Activated T-helper 1 cell treated with anti-CD3 and anti-CD28 coated beads, Interleukin-12 subunit alpha, Interleukin-12 subunit beta, Interleukin-2, Interleukin-4 antibody, amounts not matched to agents 30 ng/mL and 10 ng/mL and 1 ng/mL, durations not matched to agents 14 hours and 24 hours and 36 hours (primary cell): ENCODE measurements at regions of chr19 and their contacts with region 1.

Region 1: DNA sequence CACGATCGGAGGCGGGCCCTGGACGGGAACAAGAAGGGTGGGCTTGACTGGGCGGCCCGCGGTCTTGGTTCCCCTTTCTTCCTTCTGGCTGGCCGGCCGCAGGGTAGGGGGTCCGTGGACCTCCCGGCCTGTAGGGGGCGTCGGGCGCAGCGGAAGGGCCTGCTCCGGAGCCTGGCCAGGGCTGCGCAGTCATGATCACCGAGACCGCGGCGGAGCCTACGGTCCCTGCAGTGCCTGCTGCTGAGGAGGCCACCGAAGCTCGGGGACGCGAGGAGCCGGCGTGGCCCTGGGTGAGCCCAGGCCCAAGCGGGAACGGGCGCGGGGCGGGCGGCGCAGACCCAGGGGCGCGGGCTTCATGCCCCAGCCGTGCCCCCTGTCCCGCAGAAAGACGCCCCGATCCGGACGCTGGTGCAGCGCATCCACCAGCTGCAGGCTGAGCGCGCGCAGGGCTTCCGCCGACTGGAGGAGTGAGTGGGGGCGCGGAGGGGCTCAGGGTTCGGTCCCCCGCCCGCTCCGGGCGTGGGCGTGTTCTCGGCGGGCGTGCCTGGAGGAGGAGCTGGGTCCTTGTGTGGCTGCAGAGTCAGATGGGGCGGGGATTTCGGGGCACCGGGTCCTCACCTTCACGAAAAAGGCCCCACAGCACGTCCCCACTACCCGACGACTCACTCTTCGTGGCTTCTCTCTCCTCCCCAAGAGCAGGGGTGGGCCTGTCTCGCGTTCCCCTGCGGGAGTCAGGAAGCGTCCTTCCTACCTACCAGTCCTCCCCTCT is at the start of gene REX1BD:
- DNase-seq: peak; percentile 86
- H3K4me3 Mint-ChIP-seq: peak within 1 kb of the TSS; percentile 90
- H3K27ac Mint-ChIP-seq: peak within 1 kb of the TSS; percentile 91
- H3K4me1 Mint-ChIP-seq: peaks cover 43% of the 10 kb centered on the region
- H3K27me3 Mint-ChIP-seq: no peaks in the 10 kb centered on the region
- total RNA-seq, gene REX1BD: 134 and 135 TPM in 2 replicates

Region 2: DNA sequence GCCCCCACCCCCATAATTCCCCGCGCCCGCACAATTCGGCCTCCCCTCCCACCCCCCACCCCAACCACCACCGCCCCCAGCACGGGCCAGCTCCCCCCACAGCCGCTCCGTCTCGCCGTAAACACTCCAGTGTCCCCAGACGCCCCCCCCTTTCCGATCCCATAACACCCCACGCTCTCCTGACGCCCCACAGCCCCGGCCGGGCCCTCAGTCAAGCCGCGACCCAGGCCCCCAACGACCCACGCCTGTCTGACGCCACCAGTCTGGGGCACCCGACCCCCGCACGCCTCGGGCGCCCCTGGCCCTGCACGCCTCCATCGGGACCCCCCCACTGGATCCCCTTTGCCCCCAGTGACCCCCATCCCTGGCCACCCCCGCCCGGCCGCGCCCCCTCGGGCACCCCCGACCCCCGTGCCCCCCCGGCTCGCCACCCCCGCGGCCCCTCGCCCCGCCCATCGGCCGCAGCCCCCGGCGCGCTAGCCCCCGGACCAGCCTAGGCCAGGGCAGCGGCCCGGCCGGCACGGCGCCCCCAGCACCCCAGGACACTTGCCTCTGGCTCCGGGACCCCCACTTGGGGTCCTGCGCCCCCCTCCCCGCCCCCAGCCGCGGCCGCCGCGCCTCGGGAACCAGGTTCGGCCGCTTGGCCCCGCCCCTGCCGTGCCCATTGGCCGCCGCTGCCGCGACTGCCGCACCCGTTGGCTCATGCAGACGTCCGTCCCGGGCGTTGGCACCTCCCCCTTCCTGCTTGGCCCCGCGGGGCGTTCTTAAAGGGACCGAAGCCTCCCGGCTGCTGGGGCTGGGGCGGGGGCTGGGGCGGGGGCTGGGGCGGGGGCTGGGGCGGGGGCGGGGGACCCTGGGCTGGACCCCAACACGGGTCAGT is 45.6 kb before region 1 on chr19 and contains the start of gene FKBP8:
- intact Hi-C with region 1: loop called (anchors 1 kb)
- DNase-seq: peak; percentile 92
- H3K4me3 Mint-ChIP-seq: peak within 1 kb of the TSS; percentile 92
- H3K27ac Mint-ChIP-seq: peak within 1 kb of the TSS; percentile 99
- H3K4me1 Mint-ChIP-seq: peaks cover 27% of the 10 kb centered on the region
- H3K27me3 Mint-ChIP-seq: peaks cover 4% of the 10 kb centered on the region
- total RNA-seq, gene FKBP8: 163 and 167 TPM in 2 replicates

Region 3: DNA sequence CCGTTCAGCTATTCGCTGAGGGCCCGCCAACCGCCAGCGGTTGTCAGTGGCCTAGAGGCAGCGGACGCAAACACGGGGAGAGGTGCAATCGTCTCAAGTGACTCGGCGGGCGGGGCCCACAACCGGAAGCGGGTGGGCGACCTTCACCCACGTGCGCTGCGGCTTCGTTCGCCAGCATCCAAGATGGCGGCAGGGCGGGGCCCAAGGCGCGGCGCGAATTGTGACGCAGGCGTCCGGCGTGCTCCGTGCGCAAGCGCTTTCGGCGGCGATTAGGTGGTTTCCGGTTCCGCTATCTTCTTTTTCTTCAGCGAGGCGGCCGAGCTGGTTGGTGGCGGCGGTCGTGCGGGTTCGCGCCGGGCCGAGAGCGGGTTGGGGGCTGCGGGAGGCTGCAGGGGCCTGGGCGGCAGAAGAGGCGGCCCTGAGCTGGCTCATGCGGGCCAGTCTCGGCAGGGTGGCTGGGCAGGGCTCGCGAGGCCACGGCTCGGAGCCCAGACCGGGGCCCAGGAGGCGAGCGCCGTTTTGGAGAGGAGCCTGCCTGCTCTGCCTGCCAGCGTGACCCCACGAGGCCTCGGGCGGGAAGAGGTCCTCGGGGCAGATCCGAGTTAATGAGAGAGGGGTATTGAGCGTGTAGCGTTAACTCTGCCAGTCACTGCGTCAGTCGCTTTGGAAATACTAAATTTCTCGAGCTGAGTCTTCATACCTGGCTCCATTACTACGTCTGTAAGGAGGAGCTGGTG is 17.1 kb before region 1 on chr19 and contains the start of gene UBA52:
- intact Hi-C with region 1: loop called (anchors 1 kb)
- DNase-seq: peak; percentile 99
- H3K4me3 Mint-ChIP-seq: peak within 1 kb of the TSS; percentile 91
- H3K27ac Mint-ChIP-seq: peak within 1 kb of the TSS; percentile 98
- H3K4me1 Mint-ChIP-seq: peaks cover 27% of the 10 kb centered on the region
- H3K27me3 Mint-ChIP-seq: no peaks in the 10 kb centered on the region
- total RNA-seq, gene UBA52: 1,472 and 1,500 TPM in 2 replicates

Region 4: GRCh38 chr19:18831524-18832305 is 242.9 kb after region 1 on chr19 and contains the start of gene UPF1:
- intact Hi-C with region 1: loop called (anchors 5 kb)
- DNase-seq: peak; percentile 96
- H3K4me3 Mint-ChIP-seq: peak within 1 kb of the TSS; percentile 96
- H3K27ac Mint-ChIP-seq: peak within 1 kb of the TSS; percentile 95
- H3K4me1 Mint-ChIP-seq: peaks cover 35% of the 10 kb centered on the region
- H3K27me3 Mint-ChIP-seq: peaks cover 14% of the 10 kb centered on the region
- total RNA-seq, gene UPF1: 102 and 113 TPM in 2 replicates